ENCODE measurements at regions of chr15 and their contacts with region 1.

Region 1: GRCh38 chr15:72231066-72231846 is at the start of gene PKM:
- DNase-seq: peak; percentile 66 to 96 (median 90)
- ATAC-seq: peak; percentile 22
- H3K4me3 ChIP-seq: peak within 1 kb of the TSS; percentile 83 to 95
- H3K4me3 Mint-ChIP-seq: peak within 1 kb of the TSS; percentile 99
- H3K27ac ChIP-seq: peak within 1 kb of the TSS; percentile 67 to 84
- H3K27ac Mint-ChIP-seq: peak within 1 kb of the TSS; percentile 97
- H3K4me1 ChIP-seq: peaks cover 40% of the 10 kb centered on the region
- H3K4me1 Mint-ChIP-seq: peaks cover 47% of the 10 kb centered on the region
- H3K27me3 ChIP-seq: no peaks in the 10 kb centered on the region
- H3K27me3 Mint-ChIP-seq: no peaks in the 10 kb centered on the region
- CTCF ChIP-seq: no peak
- total RNA-seq, gene PKM: 121 to 123 TPM

Region 2: GRCh38 chr15:71660501-71660900 is 570.8 kb before region 1 on chr15:
- CTCF ChIA-PET with region 1: no interaction called
- POLR2A ChIA-PET with region 1: no interaction called
- intact Hi-C with region 1: no loop called
- DNase-seq: no peak
- ATAC-seq: no peak
- H3K4me3 ChIP-seq: no peak overlapping the region
- H3K4me3 Mint-ChIP-seq: no peak overlapping the region
- H3K27ac ChIP-seq: no peak overlapping the region
- H3K27ac Mint-ChIP-seq: no peak overlapping the region
- H3K4me1 ChIP-seq: no peaks in the 10 kb centered on the region
- H3K4me1 Mint-ChIP-seq: no peaks in the 10 kb centered on the region
- H3K27me3 ChIP-seq: no peaks in the 10 kb centered on the region
- H3K27me3 Mint-ChIP-seq: peaks cover 8% of the 10 kb centered on the region
- CTCF ChIP-seq: no peak

Region 3: DNA sequence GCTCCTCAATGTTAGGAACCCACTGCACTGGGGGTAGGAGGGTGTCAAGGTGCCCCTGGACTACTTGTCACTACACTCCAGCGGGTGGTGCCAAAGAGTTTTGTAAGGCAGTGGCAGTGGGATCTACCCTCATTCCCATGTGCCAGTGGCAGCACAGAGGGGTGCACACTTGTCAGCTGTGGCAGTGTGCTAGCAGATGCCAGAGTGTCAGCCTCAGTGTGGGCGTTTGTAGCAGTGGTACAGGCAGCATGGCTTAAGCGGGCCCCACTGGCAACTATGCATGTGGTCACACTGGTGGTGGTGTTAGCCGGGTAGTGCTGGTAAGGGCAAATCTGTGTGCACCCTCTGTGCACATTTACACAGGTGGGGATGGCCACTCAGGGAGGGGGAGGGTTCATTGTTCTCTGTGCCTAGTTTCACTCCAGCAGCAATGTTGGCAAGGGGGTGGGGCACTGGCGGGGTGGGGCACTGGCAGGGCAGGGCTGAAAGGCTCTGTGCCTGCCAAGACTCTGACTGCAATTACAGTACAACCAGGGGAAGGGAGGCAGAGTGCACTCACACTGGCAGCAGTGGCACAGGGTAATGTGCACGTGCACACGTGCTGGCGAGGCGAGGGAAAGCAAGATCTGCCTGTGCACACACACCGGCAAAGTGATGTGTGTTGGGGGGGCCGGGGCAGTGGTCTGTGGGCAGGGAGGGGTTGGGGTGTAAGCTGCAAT is 145.1 kb before region 1 on chr15:
- CTCF ChIA-PET with region 1: no interaction called
- POLR2A ChIA-PET with region 1: no interaction called
- intact Hi-C with region 1: no loop called
- DNase-seq: no peak
- ATAC-seq: no peak
- H3K4me3 ChIP-seq: no peak overlapping the region
- H3K4me3 Mint-ChIP-seq: no peak overlapping the region
- H3K27ac ChIP-seq: no peak overlapping the region
- H3K27ac Mint-ChIP-seq: no peak overlapping the region
- H3K4me1 ChIP-seq: no peaks in the 10 kb centered on the region
- H3K4me1 Mint-ChIP-seq: no peaks in the 10 kb centered on the region
- H3K27me3 ChIP-seq: no peaks in the 10 kb centered on the region
- H3K27me3 Mint-ChIP-seq: no peaks in the 10 kb centered on the region
- CTCF ChIP-seq: no peak

Region 4: GRCh38 chr15:72117486-72118399 is 113.5 kb before region 1 on chr15 and contains the start of gene MYO9A:
- CTCF ChIA-PET with region 1: no interaction called
- POLR2A ChIA-PET with region 1: no interaction called
- intact Hi-C with region 1: loop called (anchors 1 to 2 kb)
- DNase-seq: peak; percentile 97 to 100 (median 99)
- ATAC-seq: peak; percentile 80
- H3K4me3 ChIP-seq: peak within 1 kb of the TSS; percentile 78 to 93
- H3K4me3 Mint-ChIP-seq: peak within 1 kb of the TSS; percentile 99
- H3K27ac ChIP-seq: peak within 1 kb of the TSS; percentile 95 to 97
- H3K27ac Mint-ChIP-seq: peak within 1 kb of the TSS; percentile 99
- H3K4me1 ChIP-seq: peaks cover 18% of the 10 kb centered on the region
- H3K4me1 Mint-ChIP-seq: peaks cover 45% of the 10 kb centered on the region
- H3K27me3 ChIP-seq: no peaks in the 10 kb centered on the region
- H3K27me3 Mint-ChIP-seq: no peaks in the 10 kb centered on the region
- CTCF ChIP-seq: no peak
- total RNA-seq, gene MYO9A: 15.1 to 20.0 TPM

Region 5: GRCh38 chr15:72206677-72207000 is 24.6 kb before region 1 on chr15:
- CTCF ChIA-PET with region 1: interaction called, 29 read pairs
- POLR2A ChIA-PET with region 1: interaction called, 3 read pairs
- intact Hi-C with region 1: no loop called
- DNase-seq: no peak
- ATAC-seq: no peak
- H3K4me3 ChIP-seq: no peak overlapping the region
- H3K4me3 Mint-ChIP-seq: no peak overlapping the region
- H3K27ac ChIP-seq: no peak overlapping the region
- H3K27ac Mint-ChIP-seq: no peak overlapping the region
- H3K4me1 ChIP-seq: no peaks in the 10 kb centered on the region
- H3K4me1 Mint-ChIP-seq: no peaks in the 10 kb centered on the region
- H3K27me3 ChIP-seq: no peaks in the 10 kb centered on the region
- H3K27me3 Mint-ChIP-seq: no peaks in the 10 kb centered on the region
- CTCF ChIP-seq: no peak

Region 6: DNA sequence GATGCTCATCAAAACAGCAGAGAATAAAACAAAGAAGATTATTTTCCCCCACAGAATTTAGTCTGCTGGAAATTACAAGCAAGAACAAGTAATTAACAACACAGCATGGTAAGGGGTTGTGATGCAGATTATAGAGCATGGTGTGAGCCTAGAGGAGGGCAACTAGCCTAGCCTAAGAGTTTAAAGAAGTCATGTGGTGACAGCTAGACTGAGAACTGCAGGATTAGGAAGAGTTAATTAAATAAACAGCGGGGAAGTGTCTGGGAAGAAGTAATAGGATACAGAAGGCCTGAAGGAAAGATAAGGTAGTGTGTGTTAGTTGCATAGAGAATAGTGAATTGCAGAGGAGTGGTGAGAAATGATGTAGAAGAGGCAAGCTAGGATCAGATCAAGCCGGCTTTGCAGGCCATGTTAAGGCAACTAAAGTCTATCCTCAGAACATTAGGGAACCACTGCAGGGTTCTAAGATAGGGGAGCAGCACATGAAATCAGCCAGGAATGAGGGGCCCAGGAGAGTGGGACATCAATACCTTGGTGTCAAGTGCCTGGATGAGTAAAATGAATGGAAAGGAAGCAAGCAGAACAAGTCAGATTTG is 11.6 kb after region 1 on chr15:
- CTCF ChIA-PET with region 1: interaction called, 5 read pairs
- POLR2A ChIA-PET with region 1: interaction called, 30 read pairs
- intact Hi-C with region 1: no loop called
- DNase-seq: no peak
- ATAC-seq: no peak
- H3K4me3 ChIP-seq: no peak overlapping the region
- H3K4me3 Mint-ChIP-seq: no peak overlapping the region
- H3K27ac ChIP-seq: no peak overlapping the region
- H3K27ac Mint-ChIP-seq: peak overlapping the region; percentile 2
- H3K4me1 ChIP-seq: no peaks in the 10 kb centered on the region
- H3K4me1 Mint-ChIP-seq: no peaks in the 10 kb centered on the region
- H3K27me3 ChIP-seq: no peaks in the 10 kb centered on the region
- H3K27me3 Mint-ChIP-seq: no peaks in the 10 kb centered on the region
- CTCF ChIP-seq: no peak

Region 7: GRCh38 chr15:72375847-72376581 is 144.8 kb after region 1 on chr15 and contains the start of gene HEXA:
- CTCF ChIA-PET with region 1: no interaction called
- POLR2A ChIA-PET with region 1: interaction called, 4 read pairs
- intact Hi-C with region 1: loop called (anchors 2 to 5 kb)
- DNase-seq: peak; percentile 94 to 99 (median 97)
- ATAC-seq: peak; percentile 73
- H3K4me3 ChIP-seq: peak within 1 kb of the TSS; percentile 75 to 77
- H3K4me3 Mint-ChIP-seq: peak within 1 kb of the TSS; percentile 90
- H3K27ac ChIP-seq: peak within 1 kb of the TSS; percentile 83 to 90
- H3K27ac Mint-ChIP-seq: peak within 1 kb of the TSS; percentile 96
- H3K4me1 ChIP-seq: peaks cover 36% of the 10 kb centered on the region
- H3K4me1 Mint-ChIP-seq: peaks cover 56% of the 10 kb centered on the region
- H3K27me3 ChIP-seq: no peaks in the 10 kb centered on the region
- H3K27me3 Mint-ChIP-seq: no peaks in the 10 kb centered on the region
- CTCF ChIP-seq: no peak
- total RNA-seq, gene HEXA: 68.6 to 76.0 TPM

Region 8: GRCh38 chr15:72783563-72784237 is 552.4 kb after region 1 on chr15 and contains the start of gene ADPGK:
- CTCF ChIA-PET with region 1: no interaction called
- POLR2A ChIA-PET with region 1: no interaction called
- intact Hi-C with region 1: loop called in 1 of 2 experiments (anchors 10 kb)
- DNase-seq: peak; percentile 92 to 99 (median 96)
- ATAC-seq: peak; percentile 80
- H3K4me3 ChIP-seq: peak within 1 kb of the TSS; percentile 90 to 91
- H3K4me3 Mint-ChIP-seq: peak within 1 kb of the TSS; percentile 96
- H3K27ac ChIP-seq: peak within 1 kb of the TSS; percentile 93 to 95
- H3K27ac Mint-ChIP-seq: peak within 1 kb of the TSS; percentile 97
- H3K4me1 ChIP-seq: peaks cover 43% of the 10 kb centered on the region
- H3K4me1 Mint-ChIP-seq: peaks cover 50% of the 10 kb centered on the region
- H3K27me3 ChIP-seq: no peaks in the 10 kb centered on the region
- H3K27me3 Mint-ChIP-seq: no peaks in the 10 kb centered on the region
- CTCF ChIP-seq: no peak
- total RNA-seq, gene ADPGK: 113 to 120 TPM